CD4-positive, alpha-beta T cell (primary cell): ENCODE measurements at regions of chr21 and their contacts with region 1.

Region 1: GRCh38 chr21:43949499-43950208 is 62.5 kb upstream of the TRAPPC10 start:
- DNase-seq: peak in 2 of 14 experiments; percentile 13 to 33
- ATAC-seq: peak; percentile 62
- H3K4me3 ChIP-seq: no peak overlapping the region
- H3K4me3 Mint-ChIP-seq: peak overlapping the region; percentile 50
- H3K27ac ChIP-seq: no peak overlapping the region
- H3K27ac Mint-ChIP-seq: peak overlapping the region; percentile 63
- H3K4me1 ChIP-seq: peaks cover 12% of the 10 kb centered on the region
- H3K4me1 Mint-ChIP-seq: peaks cover 25% of the 10 kb centered on the region
- H3K27me3 ChIP-seq: no peaks in the 10 kb centered on the region
- H3K27me3 Mint-ChIP-seq: no peaks in the 10 kb centered on the region
- CTCF ChIP-seq: no peak

Region 2: DNA sequence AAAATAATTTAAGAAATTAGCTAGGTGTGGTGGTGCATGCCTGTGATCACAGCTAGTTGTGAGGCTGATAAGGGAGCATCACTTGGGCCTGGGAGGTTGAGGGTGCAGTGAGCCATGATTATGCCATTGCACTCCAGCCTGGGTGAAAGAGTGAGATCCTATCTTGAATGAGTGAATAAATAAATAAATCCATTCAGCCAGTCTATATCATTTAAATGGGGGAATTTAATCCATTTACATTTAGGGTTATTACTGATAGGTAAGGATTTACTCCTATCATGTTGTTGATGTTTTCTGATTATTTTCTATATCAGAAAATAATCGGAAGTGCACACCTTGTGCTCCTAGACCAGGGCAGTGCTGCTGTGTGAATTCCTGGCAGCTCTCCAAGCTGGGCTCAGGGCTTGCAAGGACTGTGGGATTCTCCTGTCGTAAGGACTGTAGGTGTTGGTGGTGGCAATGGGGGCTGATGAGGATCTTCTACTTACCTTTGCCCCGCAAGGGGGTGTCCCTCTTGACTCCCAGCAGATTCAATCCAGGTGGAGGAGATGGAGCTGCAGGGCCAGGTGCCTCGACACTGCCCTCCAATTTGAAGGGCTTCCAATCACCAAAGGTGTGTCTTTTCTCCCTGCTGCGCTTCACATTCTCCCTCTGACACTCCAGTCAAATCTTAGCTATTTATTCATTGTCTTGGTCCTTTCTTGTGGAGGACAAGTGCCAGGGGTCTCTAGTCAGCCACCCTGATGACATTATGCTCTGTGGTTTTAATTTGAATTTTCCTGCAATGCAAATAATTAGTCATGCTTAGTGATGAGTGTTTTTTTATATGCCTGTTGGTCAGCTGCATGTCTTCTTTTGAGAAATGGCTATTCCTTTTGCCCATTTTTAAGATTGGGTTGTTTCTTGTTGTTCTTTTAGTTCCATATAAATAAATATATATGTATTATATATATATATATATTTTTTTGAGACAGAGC is 48.4 kb after region 1 on chr21:
- CTCF ChIA-PET with region 1: no interaction called
- POLR2A ChIA-PET with region 1: no interaction called
- intact Hi-C with region 1: loop called in 1 of 2 experiments (anchors 5 kb)
- DNase-seq: no peak
- ATAC-seq: no peak
- H3K4me3 ChIP-seq: no peak overlapping the region
- H3K4me3 Mint-ChIP-seq: no peak overlapping the region
- H3K27ac ChIP-seq: no peak overlapping the region
- H3K27ac Mint-ChIP-seq: no peak overlapping the region
- H3K4me1 ChIP-seq: no peaks in the 10 kb centered on the region
- H3K4me1 Mint-ChIP-seq: no peaks in the 10 kb centered on the region
- H3K27me3 ChIP-seq: no peaks in the 10 kb centered on the region
- H3K27me3 Mint-ChIP-seq: no peaks in the 10 kb centered on the region
- CTCF ChIP-seq: no peak